Naive thymus-derived CD4-positive, alpha-beta T cell (primary cell): ENCODE measurements at regions of chr9 and their contacts with region 1.

Region 1: GRCh38 chr9:14322211-14323082 is 8.5 kb upstream of the NFIB start:
- DNase-seq: peak; percentile 26 to 87 (median 33)
- ATAC-seq: peak; percentile 87
- H3K4me3 ChIP-seq: peak overlapping the region; percentile 56
- H3K4me3 Mint-ChIP-seq: peak overlapping the region; percentile 75 to 94 (median 89)
- H3K27ac ChIP-seq: no peak overlapping the region
- H3K27ac Mint-ChIP-seq: peak overlapping the region in 2 of 9 donors; percentile 76
- H3K4me1 ChIP-seq: no peaks in the 10 kb centered on the region
- H3K4me1 Mint-ChIP-seq: peaks cover 13 to 21% (median 20%) of the 10 kb centered on the region in 7 donors
- H3K27me3 ChIP-seq: peaks cover 0 to 8% of the 10 kb centered on the region in 2 donors
- H3K27me3 Mint-ChIP-seq: peaks cover 37 to 70% (median 66%) of the 10 kb centered on the region in 5 donors

Region 2: GRCh38 chr9:14221558-14221957 is 100.9 kb before region 1 on chr9:
- CTCF ChIA-PET with region 1: no interaction called
- POLR2A ChIA-PET with region 1: no interaction called
- intact Hi-C with region 1: no loop called
- DNase-seq: no peak
- ATAC-seq: no peak
- H3K4me3 ChIP-seq: no peak overlapping the region
- H3K4me3 Mint-ChIP-seq: no peak overlapping the region
- H3K27ac ChIP-seq: no peak overlapping the region
- H3K27ac Mint-ChIP-seq: no peak overlapping the region
- H3K4me1 ChIP-seq: no peaks in the 10 kb centered on the region
- H3K4me1 Mint-ChIP-seq: no peaks in the 10 kb centered on the region
- H3K27me3 ChIP-seq: no peaks in the 10 kb centered on the region
- H3K27me3 Mint-ChIP-seq: peaks cover 0 to 6% (median 0%) of the 10 kb centered on the region in 5 donors

Region 3: GRCh38 chr9:14347406-14348122 is 25.1 kb after region 1 on chr9:
- CTCF ChIA-PET with region 1: no interaction called
- POLR2A ChIA-PET with region 1: no interaction called
- intact Hi-C with region 1: loop called in 1 of 2 experiments (anchors 2 kb)
- DNase-seq: no peak
- ATAC-seq: no peak
- H3K4me3 ChIP-seq: no peak overlapping the region
- H3K4me3 Mint-ChIP-seq: no peak overlapping the region
- H3K27ac ChIP-seq: no peak overlapping the region
- H3K27ac Mint-ChIP-seq: no peak overlapping the region
- H3K4me1 ChIP-seq: no peaks in the 10 kb centered on the region
- H3K4me1 Mint-ChIP-seq: peaks cover 3 to 19% (median 5%) of the 10 kb centered on the region in 7 donors
- H3K27me3 ChIP-seq: peaks cover 0 to 10% of the 10 kb centered on the region in 2 donors
- H3K27me3 Mint-ChIP-seq: peaks cover 50 to 59% (median 54%) of the 10 kb centered on the region in 5 donors

Region 4: DNA sequence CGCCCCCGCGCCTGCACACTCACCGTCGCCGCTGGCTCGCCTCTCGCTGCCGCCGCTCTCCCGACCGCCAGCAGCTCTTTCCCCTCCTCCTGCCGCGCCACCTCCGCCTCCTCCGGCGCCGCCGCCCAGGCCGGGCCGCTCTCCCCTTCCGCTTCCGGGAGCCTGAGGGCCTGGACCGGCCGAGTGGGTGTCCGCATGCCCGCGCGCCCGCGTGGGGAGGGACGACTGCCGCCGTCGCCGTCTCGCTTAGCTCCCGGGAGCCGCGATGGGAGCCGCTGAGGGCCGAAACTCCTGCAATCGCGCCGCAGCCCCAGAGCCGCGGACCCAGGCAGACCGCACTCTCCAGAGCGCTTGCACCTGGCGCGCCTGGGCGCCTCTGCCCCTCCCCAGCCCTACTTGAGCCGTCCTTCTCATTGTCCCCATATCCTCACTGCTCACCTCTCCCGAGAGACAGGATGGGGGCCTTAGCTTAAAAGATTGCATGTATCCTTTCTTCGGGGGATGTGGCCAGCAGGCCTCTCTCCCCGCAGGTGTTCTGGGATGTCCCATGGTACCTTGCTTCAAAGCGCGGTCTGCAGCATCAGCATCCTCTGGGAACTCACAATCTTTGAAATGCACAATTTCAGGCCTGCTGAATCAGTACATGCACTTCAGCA is 370.9 kb after region 1 on chr9 and contains the start of gene ZDHHC21:
- CTCF ChIA-PET with region 1: no interaction called
- POLR2A ChIA-PET with region 1: no interaction called
- intact Hi-C with region 1: loop called in 1 of 2 experiments (anchors 10 kb)
- DNase-seq: peak; percentile 20 to 75 (median 42)
- ATAC-seq: peak; percentile 83
- H3K4me3 ChIP-seq: peak within 1 kb of the TSS; percentile 67
- H3K4me3 Mint-ChIP-seq: peak within 1 kb of the TSS; percentile 91 to 97 (median 94)
- H3K27ac ChIP-seq: peak within 1 kb of the TSS; percentile 59
- H3K27ac Mint-ChIP-seq: peak within 1 kb of the TSS; percentile 79 to 97 (median 87)
- H3K4me1 ChIP-seq: peaks cover 6 to 8% of the 10 kb centered on the region in 2 donors
- H3K4me1 Mint-ChIP-seq: peaks cover 22 to 36% (median 33%) of the 10 kb centered on the region in 7 donors
- H3K27me3 ChIP-seq: no peaks in the 10 kb centered on the region
- H3K27me3 Mint-ChIP-seq: peaks cover 0 to 19% (median 9%) of the 10 kb centered on the region in 5 donors
- total RNA-seq, gene ZDHHC21: 5.4 to 9.8 (median 5.8) TPM

Region 5: GRCh38 chr9:14993061-14993800 is 670.8 kb after region 1 on chr9:
- CTCF ChIA-PET with region 1: no interaction called
- POLR2A ChIA-PET with region 1: no interaction called
- intact Hi-C with region 1: loop called in 1 of 2 experiments (anchors 10 kb)
- DNase-seq: peak; percentile 9 to 50 (median 27)
- ATAC-seq: peak; percentile 45
- H3K4me3 ChIP-seq: peak overlapping the region; percentile 70
- H3K4me3 Mint-ChIP-seq: peak overlapping the region; percentile 79 to 92 (median 86)
- H3K27ac ChIP-seq: peak overlapping the region; percentile 61
- H3K27ac Mint-ChIP-seq: peak overlapping the region; percentile 75 to 94 (median 84)
- H3K4me1 ChIP-seq: peaks cover 14 to 18% of the 10 kb centered on the region in 2 donors
- H3K4me1 Mint-ChIP-seq: peaks cover 31 to 44% (median 40%) of the 10 kb centered on the region in 7 donors
- H3K27me3 ChIP-seq: no peaks in the 10 kb centered on the region
- H3K27me3 Mint-ChIP-seq: peaks cover 0 to 3% (median 0%) of the 10 kb centered on the region in 5 donors